ENCODE measurements at regions of chr11 and their contacts with region 1.

Region 1: DNA sequence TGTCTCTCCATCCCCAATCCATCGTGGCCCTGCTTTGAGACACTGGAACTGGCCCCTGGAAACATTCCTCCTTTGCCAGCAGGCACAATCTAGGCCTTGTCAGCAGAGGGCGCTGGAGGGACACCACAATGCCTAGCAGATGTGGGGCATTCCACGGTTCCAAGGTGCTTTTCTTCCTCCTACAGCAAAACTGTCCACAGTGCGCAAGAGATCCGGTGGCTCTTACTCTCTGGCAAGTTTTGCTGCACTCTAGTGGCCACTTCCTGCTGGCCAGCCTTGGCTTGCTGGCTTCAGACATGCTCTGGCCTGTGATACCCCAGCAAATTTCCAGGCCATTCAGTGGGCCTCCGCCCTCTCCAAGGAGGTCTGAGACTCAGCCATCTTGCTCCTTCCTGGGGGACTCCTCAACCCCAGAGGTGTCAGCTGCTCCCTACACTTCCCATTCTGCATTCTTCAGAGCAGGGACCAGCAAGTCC is 17.1 kb upstream of the RBM4B start:
- DNase-seq: peak; percentile 70 to 93 (median 86)

Region 2: DNA sequence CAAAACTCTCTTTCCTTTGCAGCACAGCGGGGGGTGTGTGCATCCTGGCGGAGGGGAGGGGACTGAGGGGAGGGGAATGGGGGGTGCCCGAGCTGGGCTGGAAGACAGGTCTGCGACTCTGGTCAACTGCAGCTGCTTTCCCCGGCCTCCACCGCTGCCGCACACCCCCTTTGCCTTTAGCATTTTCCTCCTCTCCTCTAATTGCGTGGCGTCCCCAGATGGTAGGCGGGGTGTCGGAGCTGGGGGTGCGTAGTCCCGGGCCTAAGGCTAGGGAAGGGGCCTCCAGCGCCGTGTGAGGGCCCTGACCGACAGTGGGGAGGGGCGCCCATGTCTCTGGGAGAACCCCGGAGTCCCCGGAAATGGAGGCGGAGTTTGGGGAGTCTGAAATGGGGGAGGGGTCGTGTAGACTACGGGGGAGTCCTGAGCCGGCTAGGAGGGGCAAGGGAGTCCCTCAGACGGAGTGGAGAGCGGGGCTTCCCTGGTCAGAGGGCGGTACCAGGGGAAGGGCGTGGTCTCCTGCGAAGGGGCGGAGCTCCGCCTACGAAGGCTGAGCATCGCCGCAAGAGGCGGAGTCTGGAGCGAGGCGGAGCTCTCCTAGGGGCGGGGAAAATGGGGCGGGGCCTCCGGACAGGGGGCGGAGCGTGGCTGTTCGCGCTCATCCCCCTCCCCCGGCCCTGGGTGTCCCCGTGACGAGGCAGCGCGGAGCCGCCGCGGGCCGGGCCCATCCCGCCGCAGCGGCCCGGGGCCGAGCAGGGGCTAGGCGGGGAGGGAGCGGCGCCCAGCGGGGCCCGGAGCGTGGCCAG is 228.3 kb before region 1 on chr11 and contains the start of gene PELI3:
- intact Hi-C with region 1: no loop called
- DNase-seq: peak; percentile 82 to 97 (median 94)

Region 3: GRCh38 chr11:66651016-66651415 is 43.8 kb before region 1 on chr11:
- intact Hi-C with region 1: no loop called
- DNase-seq: no peak

Region 4: DNA sequence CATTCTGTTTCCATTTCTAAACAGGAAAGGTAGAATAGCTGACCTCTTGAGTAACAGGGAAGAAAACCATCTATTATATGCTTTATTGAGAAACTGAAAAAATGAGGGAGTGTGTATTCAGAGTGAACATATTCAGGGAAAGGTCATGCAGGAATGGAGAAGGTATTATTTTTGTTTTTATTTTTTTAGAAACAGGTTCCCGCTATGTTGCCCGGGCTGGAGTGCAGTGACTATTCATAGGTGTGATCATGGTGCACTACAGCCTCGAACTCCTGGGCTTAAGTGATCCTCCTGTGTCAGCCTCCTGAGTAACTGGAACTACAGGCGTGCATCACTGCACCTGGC is 139.7 kb after region 1 on chr11:
- intact Hi-C with region 1: loop called (anchors 5 kb)
- DNase-seq: no peak

Measured in head of caudate nucleus (tissue), 42 donors.